ENCODE measurements at regions of chr3 and their contacts with region 1.

Region 1: DNA sequence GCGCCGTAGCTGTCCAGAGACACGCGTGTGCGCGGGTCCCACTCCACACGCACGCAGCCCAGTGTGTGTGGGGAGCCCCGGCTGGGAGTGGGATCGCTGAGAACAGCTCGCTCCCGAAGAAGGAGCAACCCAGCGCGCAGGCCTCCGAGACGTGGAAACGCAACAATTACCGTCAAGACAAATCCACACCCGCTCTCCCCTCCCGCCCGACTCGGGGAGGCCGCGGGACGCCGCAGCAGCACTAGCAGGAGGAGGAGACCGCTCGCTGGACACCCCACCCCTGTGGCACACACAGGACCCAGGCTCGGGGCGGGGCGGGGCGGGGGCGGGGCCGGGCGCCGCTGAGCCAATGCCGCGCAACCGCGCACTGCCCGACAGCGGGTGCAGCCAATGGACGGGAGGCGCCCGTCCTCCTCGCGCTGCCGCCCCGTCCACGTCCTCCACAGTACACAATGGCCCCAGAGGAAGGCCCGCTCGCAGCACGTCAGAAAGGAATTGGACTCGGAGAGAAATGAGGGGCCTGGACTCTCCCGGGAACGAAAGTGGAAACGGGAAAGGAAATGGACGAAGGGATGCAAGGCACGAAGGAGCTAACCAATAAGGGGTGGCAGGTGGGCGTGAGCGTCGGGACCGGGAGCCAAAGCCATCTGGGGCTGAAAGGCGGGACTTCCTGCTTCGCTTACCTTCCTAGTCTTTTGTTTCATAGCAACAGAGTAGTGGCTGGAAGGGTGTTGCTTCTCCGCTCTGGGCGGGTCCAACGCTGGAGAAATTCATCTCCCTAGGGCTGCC is at the start of gene CBLB:
- DNase-seq: peak; percentile 82
- H3K4me3 Mint-ChIP-seq: peak within 1 kb of the TSS; percentile 89
- H3K27ac Mint-ChIP-seq: peak within 1 kb of the TSS; percentile 93
- H3K4me1 Mint-ChIP-seq: peaks cover 26% of the 10 kb centered on the region
- H3K27me3 Mint-ChIP-seq: no peaks in the 10 kb centered on the region
- total RNA-seq, gene CBLB: 146 and 152 TPM in 2 replicates

Region 2: DNA sequence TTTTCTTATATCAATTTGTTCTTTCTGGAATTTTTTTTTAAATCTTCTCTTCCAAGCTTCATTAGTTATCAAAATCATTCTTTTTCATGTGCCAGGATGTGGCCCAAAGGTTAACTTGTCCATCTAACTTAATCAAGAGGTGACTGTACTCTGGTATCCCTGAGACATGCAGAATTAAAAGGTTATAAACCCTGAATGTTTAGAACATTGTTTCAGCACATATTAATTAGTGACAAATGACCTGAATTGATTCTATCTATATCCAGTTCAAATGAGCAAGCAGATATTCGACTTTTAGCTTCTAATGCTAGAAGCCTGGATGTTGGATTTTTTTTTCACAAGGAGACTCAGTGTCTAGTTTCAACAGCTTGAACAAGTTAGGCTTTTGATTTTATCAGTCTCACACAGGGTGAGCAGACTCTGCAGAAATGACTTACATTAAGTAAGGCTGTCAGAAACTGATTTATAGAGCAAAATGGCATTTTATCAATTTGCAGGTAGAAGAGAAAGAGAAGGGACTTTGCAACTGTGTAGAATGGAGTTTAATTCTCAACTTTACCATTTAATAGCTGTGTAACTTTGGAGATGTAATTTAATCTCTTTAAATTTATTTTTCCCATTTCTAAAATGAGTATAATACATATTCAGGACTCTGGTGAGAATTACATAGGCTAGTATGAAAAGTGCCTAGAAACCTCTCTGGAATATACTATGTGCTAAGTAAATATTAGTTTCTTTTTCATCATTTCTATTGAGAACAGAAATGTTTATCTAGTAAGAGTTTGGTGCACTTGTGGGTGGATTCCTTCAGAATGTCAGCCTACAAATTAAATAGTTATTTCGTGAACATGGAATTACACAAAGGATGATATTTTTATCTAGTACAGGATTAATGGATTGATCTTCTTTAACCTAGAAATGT is 402.2 kb before region 1 on chr3:
- intact Hi-C with region 1: no loop called
- DNase-seq: no peak
- H3K4me3 Mint-ChIP-seq: no peak overlapping the region
- H3K27ac Mint-ChIP-seq: no peak overlapping the region
- H3K4me1 Mint-ChIP-seq: peaks cover 3% of the 10 kb centered on the region
- H3K27me3 Mint-ChIP-seq: no peaks in the 10 kb centered on the region

Region 3: DNA sequence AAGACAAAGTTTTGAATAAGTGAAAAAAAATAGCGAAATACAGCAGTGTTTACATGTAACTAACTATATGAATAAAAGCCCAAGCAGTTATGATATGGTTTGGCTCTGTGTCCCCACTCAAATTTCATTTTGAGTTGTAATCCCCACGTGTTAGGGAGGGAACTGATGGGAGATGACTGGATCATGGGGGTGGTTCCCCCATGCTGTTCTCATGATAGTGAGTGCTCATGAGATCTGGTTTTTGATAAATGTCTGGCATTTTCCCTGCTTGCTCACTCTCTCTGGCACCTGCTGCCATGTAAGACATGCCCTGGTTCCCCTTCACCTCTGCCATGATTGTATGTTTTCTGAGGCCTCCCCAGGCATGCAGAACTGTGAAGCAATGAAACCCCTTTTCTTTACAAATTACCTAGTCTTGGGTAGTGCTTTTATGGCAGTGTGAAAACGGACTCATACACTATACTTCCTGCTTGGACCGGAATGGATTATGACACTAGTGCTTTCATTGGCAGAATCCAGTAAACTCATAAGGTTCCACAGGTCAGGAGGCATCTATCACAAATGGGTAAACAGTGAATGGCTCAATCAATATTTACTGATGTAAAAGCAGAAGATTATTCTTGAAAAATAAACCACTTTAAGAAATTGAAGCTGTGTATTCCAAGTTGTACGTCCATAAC is 192.2 kb before region 1 on chr3:
- intact Hi-C with region 1: loop called (anchors 1 kb)
- DNase-seq: no peak
- H3K4me3 Mint-ChIP-seq: no peak overlapping the region
- H3K27ac Mint-ChIP-seq: peak overlapping the region; percentile 74
- H3K4me1 Mint-ChIP-seq: peaks cover 23% of the 10 kb centered on the region
- H3K27me3 Mint-ChIP-seq: no peaks in the 10 kb centered on the region

Region 4: GRCh38 chr3:105691633-105692032 is 177.3 kb before region 1 on chr3:
- intact Hi-C with region 1: no loop called
- DNase-seq: no peak
- H3K4me3 Mint-ChIP-seq: no peak overlapping the region
- H3K27ac Mint-ChIP-seq: no peak overlapping the region
- H3K4me1 Mint-ChIP-seq: peaks cover 31% of the 10 kb centered on the region
- H3K27me3 Mint-ChIP-seq: no peaks in the 10 kb centered on the region

Region 5: GRCh38 chr3:105806361-105806760 is 62.6 kb before region 1 on chr3:
- intact Hi-C with region 1: loop called (anchors 2 kb)
- DNase-seq: no peak
- H3K4me3 Mint-ChIP-seq: no peak overlapping the region
- H3K27ac Mint-ChIP-seq: peak overlapping the region; percentile 68
- H3K4me1 Mint-ChIP-seq: peaks cover 66% of the 10 kb centered on the region
- H3K27me3 Mint-ChIP-seq: no peaks in the 10 kb centered on the region

Region 6: DNA sequence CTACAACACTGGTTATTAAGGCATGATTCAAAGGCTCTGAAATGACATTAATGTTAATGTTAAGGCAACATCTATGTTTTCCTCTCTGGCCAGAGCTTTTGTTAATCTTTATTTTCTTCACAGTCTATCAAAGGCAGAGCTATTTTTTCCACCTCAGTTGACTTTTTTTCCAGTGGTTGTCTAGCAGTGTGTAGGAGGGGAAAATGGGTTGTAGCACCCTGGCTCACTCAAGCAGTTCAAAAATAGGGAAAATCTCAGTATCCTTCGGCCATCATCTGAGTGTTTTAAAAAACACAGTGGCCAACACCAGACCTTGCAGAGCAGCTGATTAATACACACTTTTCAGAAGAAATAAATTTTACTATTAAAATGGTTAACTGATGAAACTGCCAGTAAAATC is 21.5 kb before region 1 on chr3:
- intact Hi-C with region 1: loop called (anchors 2 kb)
- DNase-seq: no peak
- H3K4me3 Mint-ChIP-seq: peak overlapping the region; percentile 43
- H3K27ac Mint-ChIP-seq: peak overlapping the region; percentile 91
- H3K4me1 Mint-ChIP-seq: peaks cover 53% of the 10 kb centered on the region
- H3K27me3 Mint-ChIP-seq: no peaks in the 10 kb centered on the region

Region 7: GRCh38 chr3:106176734-106177133 is 307.8 kb after region 1 on chr3:
- intact Hi-C with region 1: loop called (anchors 1 kb)
- DNase-seq: peak; percentile 72
- H3K4me3 Mint-ChIP-seq: peak overlapping the region; percentile 57
- H3K27ac Mint-ChIP-seq: peak overlapping the region; percentile 91
- H3K4me1 Mint-ChIP-seq: peaks cover 59% of the 10 kb centered on the region
- H3K27me3 Mint-ChIP-seq: no peaks in the 10 kb centered on the region

Region 8: GRCh38 chr3:106206146-106206545 is 337.2 kb after region 1 on chr3:
- intact Hi-C with region 1: loop called (anchors 2 kb)
- DNase-seq: no peak
- H3K4me3 Mint-ChIP-seq: peak overlapping the region; percentile 43
- H3K27ac Mint-ChIP-seq: peak overlapping the region; percentile 86
- H3K4me1 Mint-ChIP-seq: peaks cover 46% of the 10 kb centered on the region
- H3K27me3 Mint-ChIP-seq: no peaks in the 10 kb centered on the region

Region 9: GRCh38 chr3:106609666-106610301 is 740.8 kb after region 1 on chr3:
- intact Hi-C with region 1: loop called (anchors 5 kb)
- DNase-seq: peak; percentile 41
- H3K4me3 Mint-ChIP-seq: no peak overlapping the region
- H3K27ac Mint-ChIP-seq: peak overlapping the region; percentile 73
- H3K4me1 Mint-ChIP-seq: peaks cover 26% of the 10 kb centered on the region
- H3K27me3 Mint-ChIP-seq: no peaks in the 10 kb centered on the region

Measured in activated T-helper 2 cell treated with anti-CD3 and anti-CD28 coated beads, Interferon-gamma antibody, Interleukin-2, Interleukin-4, amounts not matched to agents 10 μg/mL and 5 μg/mL and 100 μg/mL, durations not matched to agents 14 hours and 24 hours and 36 hours (primary cell).